Activated CD4-positive, alpha-beta memory T cell treated with anti-CD3 and anti-CD28 coated beads, Interleukin-2, amount 10 ng/mL, durations not matched to agents 7 days and 5 days (primary cell): ENCODE measurements at regions of chr10 and their contacts with region 1.

Region 1: DNA sequence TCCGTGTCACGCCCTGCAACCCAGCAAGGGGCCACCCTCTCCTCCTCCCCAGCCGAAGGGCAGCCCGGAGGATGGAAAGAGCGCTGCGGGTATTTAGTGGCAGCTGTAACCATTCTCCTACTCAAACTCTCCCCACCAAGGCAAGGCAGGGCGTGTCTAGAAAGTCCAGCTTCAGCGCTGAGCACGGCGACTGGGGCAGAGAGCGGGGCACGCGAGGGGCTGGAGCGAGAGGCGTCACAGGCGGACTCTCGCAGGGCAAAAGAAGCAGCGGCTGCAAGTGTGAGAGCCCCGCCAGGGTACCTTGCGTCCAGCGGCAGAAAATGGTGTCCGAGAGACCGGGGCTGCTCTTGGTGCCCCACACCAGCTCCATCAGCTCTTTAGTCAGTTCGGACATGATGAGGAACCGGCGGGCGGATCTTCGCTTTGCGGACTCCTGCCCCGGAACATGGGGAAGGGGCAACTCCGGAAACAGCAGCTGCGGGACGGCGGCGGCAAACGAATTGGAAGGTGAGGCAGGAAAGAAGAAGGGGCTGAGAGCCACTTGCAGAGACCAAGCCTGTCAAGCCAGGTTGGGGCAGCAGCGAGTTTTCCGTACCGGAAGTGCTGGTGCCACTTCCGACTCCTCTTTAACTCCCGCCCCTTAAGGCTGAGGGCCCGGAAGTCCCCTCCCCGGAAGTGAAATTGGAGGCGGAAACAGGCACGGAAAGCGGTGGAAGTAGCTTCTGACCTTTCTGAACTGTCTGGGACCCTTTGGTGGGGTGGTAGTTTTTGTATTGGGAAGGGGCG is at the start of gene MINDY3:
- DNase-seq: peak; percentile 87
- H3K4me3 Mint-ChIP-seq: peak within 1 kb of the TSS; percentile 98
- H3K27ac Mint-ChIP-seq: peak within 1 kb of the TSS; percentile 93
- H3K4me1 Mint-ChIP-seq: peaks cover 35% of the 10 kb centered on the region
- H3K27me3 Mint-ChIP-seq: peaks cover 16% of the 10 kb centered on the region
- total RNA-seq, gene MINDY3: 22.9 to 25.0 TPM

Region 2: DNA sequence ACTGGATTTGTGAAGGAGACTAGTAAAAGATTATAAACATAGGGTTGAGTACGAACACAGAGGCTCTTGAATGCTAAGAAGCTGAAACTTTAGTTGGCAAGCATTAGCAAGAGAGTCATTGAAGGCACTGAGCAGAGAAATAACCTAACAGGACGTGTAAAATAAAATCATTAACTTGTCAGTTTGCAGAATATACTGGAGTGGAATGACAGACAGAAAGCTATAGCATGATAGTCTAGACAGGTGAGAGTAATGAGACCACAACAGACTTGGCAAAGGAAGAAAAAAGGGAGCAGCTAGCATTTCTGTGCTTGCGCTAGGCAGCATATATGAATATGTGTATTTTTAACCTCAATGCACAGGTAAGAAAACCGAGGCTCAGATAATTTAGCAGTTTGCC is 30.6 kb before region 1 on chr10:
- CTCF ChIA-PET with region 1: interaction called, 5 read pairs
- POLR2A ChIA-PET with region 1: interaction called, 31 read pairs
- DNase-seq: no peak
- H3K4me3 Mint-ChIP-seq: no peak overlapping the region
- H3K27ac Mint-ChIP-seq: no peak overlapping the region
- H3K4me1 Mint-ChIP-seq: peaks cover 36% of the 10 kb centered on the region
- H3K27me3 Mint-ChIP-seq: no peaks in the 10 kb centered on the region